ENCODE measurements at regions of chr1 and their contacts with region 1.

Region 1: DNA sequence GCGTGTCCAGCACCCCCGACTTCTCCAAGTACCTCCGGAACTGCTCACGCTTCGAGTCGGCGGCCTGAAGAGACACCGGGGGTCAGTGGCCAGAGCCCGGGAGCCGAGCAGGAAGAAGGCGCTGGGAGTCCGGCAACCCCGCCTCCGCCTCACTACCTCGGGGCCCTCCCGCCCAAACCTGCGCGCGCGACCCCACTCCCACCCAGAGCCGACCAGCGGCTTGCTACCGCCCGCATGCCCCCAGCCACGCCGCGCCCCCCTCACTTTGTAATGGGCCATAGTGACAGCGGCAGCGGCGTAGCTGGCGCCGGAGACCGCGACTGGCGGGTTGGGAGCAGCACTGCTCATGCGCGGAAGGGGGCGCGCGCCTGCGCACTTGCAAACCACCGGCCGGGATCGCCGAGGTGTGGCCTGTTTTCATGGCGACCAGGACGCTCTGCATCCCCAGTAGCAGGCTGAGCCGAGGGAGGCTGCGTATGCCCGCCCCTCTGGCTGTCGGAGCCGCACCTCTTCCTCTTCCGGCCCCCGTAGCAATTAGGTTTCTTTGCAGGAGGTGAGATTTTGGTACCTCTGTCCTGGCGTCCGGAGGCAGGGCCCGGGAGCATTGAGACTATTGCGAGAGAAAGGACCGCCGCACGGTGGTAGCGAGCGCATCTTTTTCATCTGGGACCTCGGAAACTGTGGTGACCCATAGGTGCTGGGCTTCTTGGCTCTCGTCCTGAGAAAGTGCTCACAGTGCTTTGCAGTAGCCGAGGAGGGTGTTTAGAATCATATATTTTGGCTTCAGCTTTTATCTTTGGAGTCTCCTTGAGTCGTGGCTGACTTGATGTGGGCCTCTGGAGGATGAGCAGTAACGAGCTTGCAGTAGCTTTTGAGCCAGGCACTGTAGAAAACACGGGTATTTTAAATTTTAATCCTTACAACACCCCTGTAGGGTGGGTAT is at the start of gene MYCBP:
- DNase-seq: peak; percentile 94 to 100 (median 96)

Region 2: DNA sequence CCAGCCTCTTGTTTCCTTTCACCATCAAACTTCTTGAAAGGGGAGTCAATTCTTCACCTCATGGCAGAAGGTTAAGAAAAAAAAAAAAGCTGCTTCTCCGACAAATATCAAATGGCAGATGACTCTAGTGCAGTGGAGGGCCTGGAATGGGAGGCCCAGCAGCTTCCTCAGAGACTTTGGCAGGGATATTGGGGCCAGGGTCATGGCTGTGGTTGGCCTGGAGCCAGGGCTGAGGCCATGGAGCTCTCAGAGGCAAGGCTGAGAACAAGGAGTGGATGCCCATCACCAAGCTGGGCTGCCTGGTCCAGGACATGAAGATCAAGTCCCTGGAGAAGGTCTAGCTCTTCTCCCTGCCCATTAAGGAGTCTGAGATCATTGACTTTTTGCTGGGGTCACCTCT is 1032.6 kb before region 1 on chr1:
- intact Hi-C with region 1: no loop called
- DNase-seq: no peak

Region 3: DNA sequence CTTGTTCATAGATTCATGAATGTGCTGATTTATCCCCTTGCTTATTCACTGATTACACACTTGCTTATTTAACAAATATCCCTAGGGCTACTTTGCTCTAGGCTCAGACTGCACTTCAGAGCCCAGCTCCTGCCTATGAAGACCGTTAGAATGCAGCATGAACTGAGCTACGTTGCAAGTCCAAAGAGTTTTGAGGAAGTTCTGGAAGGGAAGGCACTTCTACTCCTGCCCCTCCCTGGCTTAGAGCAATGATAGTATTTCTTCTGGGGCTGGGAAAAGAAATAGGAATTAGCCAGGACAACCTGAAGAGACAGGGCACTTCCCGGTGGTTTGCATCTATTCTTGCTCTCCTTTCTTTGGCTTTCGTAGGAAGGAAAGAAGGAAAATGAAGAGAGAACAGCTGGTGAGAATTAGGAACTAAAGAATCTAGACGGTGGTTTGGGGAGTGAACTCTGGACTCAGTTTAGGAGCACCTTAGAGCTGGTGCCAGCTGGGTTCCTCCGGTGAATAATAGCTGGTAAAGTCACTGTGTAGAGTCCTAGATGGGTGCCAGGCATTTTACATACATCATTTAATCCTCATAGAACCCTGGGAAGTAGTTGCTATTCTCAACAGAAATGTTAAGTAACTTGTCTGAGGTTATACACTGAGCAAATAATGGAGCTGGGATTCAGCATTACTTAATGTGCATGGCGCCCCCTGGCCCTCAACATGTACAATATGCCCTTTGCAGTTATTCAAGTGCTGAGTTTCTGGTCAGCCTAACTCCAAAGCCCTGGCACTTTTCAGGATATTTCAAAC is 218.7 kb after region 1 on chr1:
- intact Hi-C with region 1: loop called (anchors 5 kb)
- DNase-seq: peak in 9 of 10 donors; percentile 42 to 95 (median 73)

Measured in posterior cingulate gyrus (tissue), 11 donors.